Dorsolateral prefrontal cortex (tissue), 120 donors: ENCODE measurements at regions of chr12 and their contacts with region 1.

Region 1: GRCh38 chr12:65935906-65936901 is 111.9 kb downstream of the HMGA2 start:
- DNase-seq: no peak
- H3K4me3 ChIP-seq: no peak overlapping the region
- H3K27ac ChIP-seq: no peak overlapping the region
- H3K27me3 ChIP-seq: peaks cover 0 to 48% (median 8%) of the 10 kb centered on the region in 45 donors
- CTCF ChIP-seq: no peak

Region 2: GRCh38 chr12:65899241-65899640 is 37.0 kb before region 1 on chr12:
- intact Hi-C with region 1: loop called in 1 of 2 experiments (anchors 2 kb)
- DNase-seq: no peak
- H3K4me3 ChIP-seq: no peak overlapping the region
- H3K27ac ChIP-seq: no peak overlapping the region
- H3K27me3 ChIP-seq: peaks cover 0 to 62% (median 19%) of the 10 kb centered on the region in 45 donors
- CTCF ChIP-seq: no peak

Region 3: DNA sequence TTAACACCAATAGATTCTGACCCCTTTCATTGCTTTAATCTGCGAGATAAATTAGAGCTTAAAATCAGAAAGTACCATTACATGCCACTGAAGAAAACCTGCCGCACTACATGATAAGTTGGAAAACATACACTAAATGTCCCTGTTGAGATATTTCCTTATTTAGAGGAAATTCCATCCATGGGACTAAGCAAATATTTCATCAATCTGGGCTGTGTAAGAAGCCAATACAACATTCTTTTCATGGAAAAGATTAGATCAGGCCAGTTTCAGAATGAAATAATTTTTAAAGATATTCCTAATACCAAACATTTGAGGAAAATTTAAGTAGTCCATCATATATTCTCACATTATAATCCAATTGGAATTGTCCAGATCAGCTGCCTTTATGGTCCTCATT is 81.5 kb after region 1 on chr12:
- intact Hi-C with region 1: no loop called
- DNase-seq: no peak
- H3K4me3 ChIP-seq: no peak overlapping the region
- H3K27ac ChIP-seq: no peak overlapping the region
- H3K27me3 ChIP-seq: peaks cover 0 to 18% (median 0%) of the 10 kb centered on the region in 45 donors
- CTCF ChIP-seq: no peak